Activated T-helper 1 cell treated with anti-CD3 and anti-CD28 coated beads, Interleukin-12 subunit alpha, Interleukin-12 subunit beta, Interleukin-2, Interleukin-4 antibody, amounts not matched to agents 30 ng/mL and 10 ng/mL and 1 ng/mL, durations not matched to agents 14 hours and 24 hours and 36 hours (primary cell): ENCODE measurements at regions of chr2 and their contacts with region 1.

Region 1: DNA sequence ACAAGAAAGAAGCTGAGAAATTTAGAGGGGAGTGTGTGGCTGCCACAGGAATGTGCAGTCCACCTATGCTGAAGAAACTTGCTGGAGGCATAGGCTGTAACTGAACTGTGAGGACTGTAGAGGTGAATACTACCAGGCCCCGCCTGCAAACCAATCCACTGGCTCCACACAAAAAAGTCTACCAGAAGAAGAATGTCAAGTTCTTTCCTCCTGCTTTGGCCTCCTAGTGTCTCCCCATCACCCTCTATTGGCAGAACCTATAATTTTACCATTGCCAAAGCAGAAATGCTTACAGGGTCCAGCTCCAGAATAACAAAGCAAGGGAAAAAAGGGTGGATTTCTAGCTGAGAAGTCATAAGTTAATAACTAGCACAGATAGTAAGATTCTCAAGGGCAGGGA is 5.9 kb upstream of the ATP5MC3 start:
- DNase-seq: no peak
- H3K4me3 Mint-ChIP-seq: no peak overlapping the region
- H3K27ac Mint-ChIP-seq: no peak overlapping the region
- H3K4me1 Mint-ChIP-seq: no peaks in the 10 kb centered on the region
- H3K27me3 Mint-ChIP-seq: peaks cover 10% of the 10 kb centered on the region

Region 2: DNA sequence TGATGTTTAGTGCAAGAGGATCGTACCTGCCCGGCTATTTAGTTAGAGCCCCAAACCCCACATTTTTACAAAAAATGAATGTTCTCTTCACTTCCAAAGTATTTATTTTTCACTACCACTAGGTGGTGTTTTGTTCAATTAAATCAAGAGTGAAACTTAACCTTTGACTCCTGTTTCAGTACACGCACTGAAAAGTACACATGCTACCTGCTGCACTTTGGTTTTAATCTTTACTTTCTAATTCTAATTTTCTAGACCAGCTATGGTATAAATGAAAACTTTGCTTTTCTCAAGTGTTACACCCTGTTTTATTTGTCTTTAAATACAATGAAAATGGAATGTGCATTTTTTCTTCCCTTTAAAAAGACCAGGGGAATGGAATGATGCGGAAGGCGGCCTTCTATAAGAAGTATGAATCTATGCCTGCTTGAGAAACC is 150.8 kb before region 1 on chr2:
- intact Hi-C with region 1: loop called (anchors 1 kb)
- DNase-seq: no peak
- H3K4me3 Mint-ChIP-seq: no peak overlapping the region
- H3K27ac Mint-ChIP-seq: no peak overlapping the region
- H3K4me1 Mint-ChIP-seq: peaks cover 7% of the 10 kb centered on the region
- H3K27me3 Mint-ChIP-seq: peaks cover 3% of the 10 kb centered on the region

Region 3: GRCh38 chr2:175074478-175074877 is 112.9 kb before region 1 on chr2:
- intact Hi-C with region 1: no loop called
- DNase-seq: no peak
- H3K4me3 Mint-ChIP-seq: no peak overlapping the region
- H3K27ac Mint-ChIP-seq: no peak overlapping the region
- H3K4me1 Mint-ChIP-seq: no peaks in the 10 kb centered on the region
- H3K27me3 Mint-ChIP-seq: no peaks in the 10 kb centered on the region

Region 4: GRCh38 chr2:175097297-175097696 is 90.1 kb before region 1 on chr2:
- intact Hi-C with region 1: no loop called
- DNase-seq: no peak
- H3K4me3 Mint-ChIP-seq: no peak overlapping the region
- H3K27ac Mint-ChIP-seq: no peak overlapping the region
- H3K4me1 Mint-ChIP-seq: no peaks in the 10 kb centered on the region
- H3K27me3 Mint-ChIP-seq: no peaks in the 10 kb centered on the region

Region 5: DNA sequence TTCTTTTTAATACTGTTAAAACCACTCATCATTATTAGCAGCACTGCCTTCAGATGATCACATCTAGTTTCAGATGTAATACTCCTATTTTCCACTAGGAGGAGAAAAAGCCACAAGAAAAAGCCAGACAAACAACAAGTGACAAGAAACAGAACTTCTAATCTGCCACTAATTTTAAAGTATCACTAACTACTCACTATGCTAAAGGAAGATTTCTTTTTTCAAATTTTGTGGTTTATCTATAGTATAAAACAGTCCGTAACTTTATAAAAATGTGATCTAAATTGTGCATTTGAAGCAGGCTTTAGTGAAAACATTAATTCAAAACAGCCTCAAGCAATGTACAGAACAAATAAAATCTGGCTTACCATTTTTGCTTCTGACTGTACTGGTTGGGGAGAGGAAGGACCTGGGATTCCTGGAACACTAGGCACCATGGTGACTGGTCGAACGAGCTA is 76.1 kb before region 1 on chr2:
- intact Hi-C with region 1: loop called (anchors 1 kb)
- DNase-seq: no peak
- H3K4me3 Mint-ChIP-seq: no peak overlapping the region
- H3K27ac Mint-ChIP-seq: peak overlapping the region; percentile 31
- H3K4me1 Mint-ChIP-seq: peaks cover 4% of the 10 kb centered on the region
- H3K27me3 Mint-ChIP-seq: no peaks in the 10 kb centered on the region

Region 6: GRCh38 chr2:175218551-175218950 is 31.2 kb after region 1 on chr2:
- intact Hi-C with region 1: no loop called
- DNase-seq: no peak
- H3K4me3 Mint-ChIP-seq: no peak overlapping the region
- H3K27ac Mint-ChIP-seq: no peak overlapping the region
- H3K4me1 Mint-ChIP-seq: no peaks in the 10 kb centered on the region
- H3K27me3 Mint-ChIP-seq: peaks cover 39% of the 10 kb centered on the region

Region 7: GRCh38 chr2:175640655-175641054 is 453.3 kb after region 1 on chr2:
- intact Hi-C with region 1: no loop called
- DNase-seq: no peak
- H3K4me3 Mint-ChIP-seq: no peak overlapping the region
- H3K27ac Mint-ChIP-seq: no peak overlapping the region
- H3K4me1 Mint-ChIP-seq: no peaks in the 10 kb centered on the region
- H3K27me3 Mint-ChIP-seq: peaks cover 2% of the 10 kb centered on the region